GM12878 (cell line): ENCODE measurements at regions of chr14 and their contacts with region 1.

Region 1: GRCh38 chr14:92793709-92794546 is at the start of gene GOLGA5:
- DNase-seq: peak; percentile 95
- ATAC-seq: peak; percentile 97
- H3K4me3 ChIP-seq: peak within 1 kb of the TSS; percentile 83
- H3K27ac ChIP-seq: peak within 1 kb of the TSS; percentile 93
- H3K4me1 ChIP-seq: peaks cover 8% of the 10 kb centered on the region
- H3K27me3 ChIP-seq: no peaks in the 10 kb centered on the region
- CTCF ChIP-seq: no peak
- EP300 ChIP-seq: peak; percentile 69 to 77; a peak in 3 of 4 replicates
- POLR2A ChIP-seq: peak; percentile 90
- RAD21 ChIP-seq: no peak
- polyA plus RNA-seq, gene GOLGA5: 10.9 to 13.9 TPM

Region 2: DNA sequence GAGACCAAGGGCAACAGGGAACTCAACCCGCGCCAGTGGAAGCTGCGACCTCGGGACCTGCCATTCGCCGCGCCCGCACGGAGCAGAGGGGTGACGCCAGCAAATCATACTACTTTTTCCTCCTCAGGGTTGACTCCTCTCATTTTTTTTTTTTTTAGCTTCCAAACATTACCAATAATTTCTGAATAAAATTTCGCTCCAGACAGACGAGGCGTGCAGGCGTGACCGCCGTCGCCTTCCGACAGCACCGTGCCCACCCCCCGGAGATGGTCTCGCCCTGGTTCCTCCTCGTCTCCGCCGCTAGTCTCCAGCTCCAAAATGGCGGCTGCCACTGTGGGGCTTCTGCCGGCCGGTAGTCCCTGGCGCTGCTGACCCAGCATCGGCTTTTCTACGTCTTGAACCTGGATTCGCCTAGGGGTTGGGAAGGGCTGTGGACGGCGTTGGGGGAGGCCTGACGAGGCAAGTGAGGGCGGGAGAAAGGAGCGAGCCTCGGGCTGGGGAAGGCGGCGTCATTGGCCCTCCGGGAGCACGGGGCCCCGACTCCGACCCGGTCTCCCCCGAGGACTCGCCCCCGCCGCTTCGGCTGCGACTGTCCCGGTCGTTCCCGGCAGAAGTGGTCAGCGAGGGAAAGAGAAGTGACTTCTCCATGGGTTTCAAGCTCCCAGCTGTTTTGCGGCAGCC is 672.1 kb before region 1 on chr14 and contains the starts of genes CPSF2 and NDUFB1:
- CTCF ChIA-PET with region 1: no interaction called
- POLR2A ChIA-PET with region 1: no interaction called
- RAD21 ChIA-PET with region 1: no interaction called
- SMC1A ChIA-PET with region 1: no interaction called
- in situ Hi-C with region 1: loop called (anchors 10 kb)
- intact Hi-C with region 1: no loop called
- DNase-seq: peak; percentile 45
- ATAC-seq: peak; percentile 93
- H3K4me3 ChIP-seq: peak within 1 kb of the TSS; percentile 96
- H3K27ac ChIP-seq: peak within 1 kb of the TSS; percentile 95
- H3K4me1 ChIP-seq: peaks cover 6% of the 10 kb centered on the region; the same call in 1 of the 2 replicates
- H3K27me3 ChIP-seq: no peaks in the 10 kb centered on the region
- CTCF ChIP-seq: no peak
- EP300 ChIP-seq: no peak
- POLR2A ChIP-seq: peak; percentile 98
- RAD21 ChIP-seq: no peak
- polyA plus RNA-seq, gene CPSF2: 18.2 to 20.1 TPM
- polyA plus RNA-seq, gene NDUFB1: 626 to 780 TPM

Region 3: GRCh38 chr14:92317511-92317910 is 476.4 kb before region 1 on chr14:
- CTCF ChIA-PET with region 1: no interaction called
- POLR2A ChIA-PET with region 1: no interaction called
- RAD21 ChIA-PET with region 1: no interaction called
- SMC1A ChIA-PET with region 1: no interaction called
- in situ Hi-C with region 1: no loop called
- intact Hi-C with region 1: no loop called
- DNase-seq: no peak
- ATAC-seq: no peak
- H3K4me3 ChIP-seq: no peak overlapping the region
- H3K27ac ChIP-seq: no peak overlapping the region
- H3K4me1 ChIP-seq: peaks cover 4% of the 10 kb centered on the region; the same call in 1 of the 2 replicates
- H3K27me3 ChIP-seq: peaks cover 3 to 7% of the 10 kb centered on the region in 2 experiments
- CTCF ChIP-seq: no peak
- EP300 ChIP-seq: no peak
- POLR2A ChIP-seq: no peak
- RAD21 ChIP-seq: no peak